Prostate gland (tissue), 2 donors: ENCODE measurements at regions of chr15 and their contacts with region 1.

Region 1: GRCh38 chr15:37100109-37100965 is at the start of gene MEIS2:
- DNase-seq: peak; percentile 91
- H3K4me3 ChIP-seq: peak within 1 kb of the TSS; percentile 57 to 65
- H3K27ac ChIP-seq: peak within 1 kb of the TSS; percentile 87 to 92
- H3K4me1 ChIP-seq: no peaks in the 10 kb centered on the region
- H3K27me3 ChIP-seq: no peaks in the 10 kb centered on the region
- CTCF ChIP-seq: no peak
- POLR2A ChIP-seq: peak; percentile 67
- total RNA-seq, gene MEIS2: 53.4 to 73.2 TPM

Region 2: GRCh38 chr15:35306361-35306981 is 1793.9 kb before region 1 on chr15:
- intact Hi-C with region 1: loop called (anchors 10 kb)
- DNase-seq: no peak
- H3K4me3 ChIP-seq: no peak overlapping the region
- H3K27ac ChIP-seq: peak overlapping the region in 1 of 2 donors; percentile 42
- H3K4me1 ChIP-seq: no peaks in the 10 kb centered on the region
- H3K27me3 ChIP-seq: no peaks in the 10 kb centered on the region
- CTCF ChIP-seq: no peak
- POLR2A ChIP-seq: no peak

Region 3: DNA sequence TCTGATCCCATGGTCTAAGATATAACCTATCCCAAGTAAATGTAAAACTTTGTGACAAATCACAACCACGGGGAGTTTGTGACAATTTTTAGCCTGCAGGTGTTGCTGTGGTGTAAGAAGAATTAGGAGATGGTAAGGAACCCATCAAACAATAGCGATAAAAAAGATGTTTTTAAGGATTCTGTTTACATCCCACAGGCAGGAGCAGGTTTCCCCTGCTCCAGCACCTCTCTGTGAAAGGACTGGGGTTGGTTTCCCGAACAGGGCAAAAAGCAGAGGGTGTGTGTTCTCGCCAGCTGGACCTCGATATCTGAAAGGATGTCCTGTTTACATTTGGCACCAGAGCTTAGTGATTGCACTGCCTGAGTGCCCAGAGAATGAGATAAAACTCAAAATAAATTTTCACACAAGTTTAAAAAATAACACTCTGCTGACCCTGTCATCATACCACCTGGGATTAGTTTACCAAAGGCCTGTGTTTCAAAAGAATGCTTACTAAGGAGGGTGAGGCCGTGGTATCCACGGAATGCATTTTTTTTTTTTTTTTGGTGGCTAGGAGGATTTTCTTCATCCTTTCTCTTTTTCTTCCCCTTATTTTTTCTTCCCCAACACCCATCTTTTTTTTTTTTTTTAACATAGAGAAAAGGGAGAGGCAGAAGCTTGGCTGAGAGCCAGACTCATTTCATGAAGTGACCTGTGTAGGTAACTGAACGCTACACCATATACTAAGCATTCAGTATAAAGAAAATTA is 1402.6 kb before region 1 on chr15:
- intact Hi-C with region 1: loop called (anchors 10 kb)
- DNase-seq: no peak
- H3K4me3 ChIP-seq: no peak overlapping the region
- H3K27ac ChIP-seq: no peak overlapping the region
- H3K4me1 ChIP-seq: no peaks in the 10 kb centered on the region
- H3K27me3 ChIP-seq: no peaks in the 10 kb centered on the region
- CTCF ChIP-seq: peak in 2 of 4 experiments; percentile 13 to 20
- POLR2A ChIP-seq: no peak

Region 4: GRCh38 chr15:36501063-36501678 is 599.2 kb before region 1 on chr15:
- intact Hi-C with region 1: loop called (anchors 5 kb)
- DNase-seq: peak; percentile 46
- H3K4me3 ChIP-seq: no peak overlapping the region
- H3K27ac ChIP-seq: no peak overlapping the region
- H3K4me1 ChIP-seq: no peaks in the 10 kb centered on the region
- H3K27me3 ChIP-seq: no peaks in the 10 kb centered on the region
- CTCF ChIP-seq: peak; percentile 41 to 71 (median 58)
- POLR2A ChIP-seq: no peak

Region 5: DNA sequence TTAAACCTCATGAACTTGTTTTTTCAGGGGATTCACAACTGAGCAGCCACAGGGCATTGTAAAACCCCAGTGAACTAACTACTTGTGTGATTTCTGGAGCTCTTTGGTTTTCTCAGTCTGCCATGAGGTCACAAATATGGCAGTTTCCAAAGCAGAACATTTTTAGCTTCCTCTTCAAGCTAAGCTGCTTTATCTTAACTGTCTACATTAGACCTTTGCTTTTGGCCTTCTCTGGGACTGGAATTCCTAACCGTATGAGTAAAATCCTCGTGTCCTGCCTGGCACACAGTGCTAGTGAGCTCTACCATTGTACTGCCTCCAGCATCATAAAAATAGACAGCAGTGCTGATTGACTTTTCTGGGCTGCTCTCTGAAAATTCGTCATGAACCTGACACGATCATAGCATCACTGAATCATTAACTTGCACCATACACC is 498.8 kb before region 1 on chr15:
- intact Hi-C with region 1: loop called (anchors 10 kb)
- DNase-seq: no peak
- H3K4me3 ChIP-seq: no peak overlapping the region
- H3K27ac ChIP-seq: peak overlapping the region in 1 of 2 donors; percentile 17
- H3K4me1 ChIP-seq: no peaks in the 10 kb centered on the region
- H3K27me3 ChIP-seq: no peaks in the 10 kb centered on the region
- CTCF ChIP-seq: no peak
- POLR2A ChIP-seq: no peak

Region 6: DNA sequence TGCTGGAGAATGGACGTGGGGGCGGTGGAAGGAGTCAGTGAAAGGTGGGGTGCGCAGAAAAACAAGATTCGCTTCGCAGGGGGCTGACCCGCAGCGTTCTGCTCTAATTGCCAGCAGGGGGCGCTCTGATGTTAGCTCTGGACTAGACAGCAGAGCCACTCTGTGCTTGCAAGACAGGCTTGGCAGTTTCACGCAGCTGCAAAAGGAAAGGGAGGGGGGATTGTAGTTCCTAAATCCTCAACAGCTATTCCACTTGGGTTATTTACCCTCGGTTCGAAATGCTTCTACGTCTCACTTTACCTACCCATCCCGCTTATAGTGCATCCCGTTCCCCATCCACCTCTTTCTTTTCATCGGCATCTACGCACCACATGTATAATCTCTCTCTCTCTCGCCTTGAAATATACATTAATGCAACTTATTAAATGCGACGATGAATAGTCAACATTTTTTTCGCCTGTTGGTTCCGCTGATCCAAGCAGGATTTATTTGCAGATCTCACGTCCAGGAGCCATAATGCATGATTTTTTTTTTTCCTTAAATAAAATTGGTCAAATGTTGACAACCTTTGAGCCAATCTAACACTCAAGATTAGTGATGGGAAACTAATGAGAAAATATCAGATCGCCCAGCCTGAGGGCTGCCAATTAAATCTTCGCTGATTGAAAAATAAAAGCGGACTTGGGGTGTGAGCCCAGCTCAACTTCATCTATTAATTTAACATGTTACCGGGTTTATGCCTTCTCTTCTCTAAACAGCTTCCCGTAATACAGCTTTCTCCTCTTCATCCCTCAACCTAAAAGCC is 216.4 kb before region 1 on chr15:
- intact Hi-C with region 1: loop called (anchors 2 kb)
- DNase-seq: peak; percentile 92
- H3K4me3 ChIP-seq: peak overlapping the region; percentile 19 to 27
- H3K27ac ChIP-seq: peak overlapping the region; percentile 54 to 73
- H3K4me1 ChIP-seq: peaks cover 3% of the 10 kb centered on the region
- H3K27me3 ChIP-seq: no peaks in the 10 kb centered on the region
- CTCF ChIP-seq: peak; percentile 74 to 93 (median 86)
- POLR2A ChIP-seq: no peak